Heart right ventricle (tissue), 16 donors: ENCODE measurements at regions of chr17 and their contacts with region 1.

Region 1: DNA sequence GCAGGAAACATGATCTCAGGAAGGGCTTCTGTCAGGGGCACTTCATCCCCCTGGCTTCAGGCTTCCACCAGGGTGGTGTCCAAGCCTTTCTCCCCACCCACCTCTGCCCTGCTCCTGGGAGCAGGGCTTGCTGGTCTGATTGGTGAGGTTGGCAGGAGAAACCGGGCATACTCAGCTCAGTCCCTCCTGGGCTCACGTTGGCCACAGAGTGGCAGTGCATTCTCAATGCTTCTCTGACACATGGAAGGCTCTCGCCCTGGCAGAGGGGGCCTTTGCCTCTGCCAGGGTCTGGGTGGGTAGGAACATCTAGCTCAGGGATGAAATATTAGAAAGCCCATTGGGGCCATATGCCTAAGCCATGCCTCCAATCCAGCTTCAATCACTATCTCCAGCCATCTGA is 142.8 kb downstream of the AXIN2 start:
- DNase-seq: peak in 1 of 2 donors; percentile 9
- ATAC-seq: peak in 4 of 8 donors; percentile 47 to 83 (median 60)
- H3K4me3 ChIP-seq: no peak overlapping the region
- H3K27ac ChIP-seq: no peak overlapping the region
- H3K4me1 ChIP-seq: no peaks in the 10 kb centered on the region
- H3K27me3 ChIP-seq: no peaks in the 10 kb centered on the region
- CTCF ChIP-seq: peak in 7 of 9 donors; percentile 11 to 46 (median 26)

Region 2: DNA sequence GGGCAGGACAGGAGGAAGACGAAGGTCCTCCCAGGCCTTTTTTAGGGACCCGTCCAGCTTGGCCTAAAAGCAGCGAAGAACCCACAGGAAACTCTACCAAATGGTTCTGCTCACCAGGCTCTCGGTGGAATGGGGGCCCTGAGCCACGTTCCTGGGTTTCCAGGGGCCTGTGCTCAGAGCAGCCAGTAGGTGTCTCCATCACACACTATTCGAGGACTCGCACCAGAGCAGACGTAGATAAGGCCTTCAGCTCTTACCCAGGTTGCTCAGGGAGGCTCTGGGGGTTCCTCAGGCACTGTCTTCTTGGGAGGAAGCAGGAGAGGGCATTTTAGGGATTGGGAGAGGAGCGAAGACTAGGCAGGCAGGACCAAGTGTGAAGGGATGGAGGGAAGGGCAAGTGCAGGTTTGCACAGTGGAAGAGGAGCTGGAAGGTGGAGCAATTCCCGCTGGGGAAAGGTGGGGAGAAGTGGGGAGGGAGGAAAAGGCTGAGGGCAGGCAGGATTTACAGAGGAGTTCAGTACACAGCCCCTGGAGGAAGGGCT is 124.4 kb before region 1 on chr17:
- intact Hi-C with region 1: loop called in 1 of 10 experiments (anchors 10 kb)
- DNase-seq: peak; percentile 28 to 30
- ATAC-seq: peak; percentile 71 to 92 (median 82)
- H3K4me3 ChIP-seq: no peak overlapping the region
- H3K27ac ChIP-seq: no peak overlapping the region
- H3K4me1 ChIP-seq: peaks cover 0 to 6% (median 0%) of the 10 kb centered on the region in 9 donors
- H3K27me3 ChIP-seq: peaks cover 0 to 5% (median 0%) of the 10 kb centered on the region in 7 donors
- CTCF ChIP-seq: peak; percentile 29 to 81 (median 73)